ENCODE measurements at regions of chr19 and their contacts with region 1.

Region 1: DNA sequence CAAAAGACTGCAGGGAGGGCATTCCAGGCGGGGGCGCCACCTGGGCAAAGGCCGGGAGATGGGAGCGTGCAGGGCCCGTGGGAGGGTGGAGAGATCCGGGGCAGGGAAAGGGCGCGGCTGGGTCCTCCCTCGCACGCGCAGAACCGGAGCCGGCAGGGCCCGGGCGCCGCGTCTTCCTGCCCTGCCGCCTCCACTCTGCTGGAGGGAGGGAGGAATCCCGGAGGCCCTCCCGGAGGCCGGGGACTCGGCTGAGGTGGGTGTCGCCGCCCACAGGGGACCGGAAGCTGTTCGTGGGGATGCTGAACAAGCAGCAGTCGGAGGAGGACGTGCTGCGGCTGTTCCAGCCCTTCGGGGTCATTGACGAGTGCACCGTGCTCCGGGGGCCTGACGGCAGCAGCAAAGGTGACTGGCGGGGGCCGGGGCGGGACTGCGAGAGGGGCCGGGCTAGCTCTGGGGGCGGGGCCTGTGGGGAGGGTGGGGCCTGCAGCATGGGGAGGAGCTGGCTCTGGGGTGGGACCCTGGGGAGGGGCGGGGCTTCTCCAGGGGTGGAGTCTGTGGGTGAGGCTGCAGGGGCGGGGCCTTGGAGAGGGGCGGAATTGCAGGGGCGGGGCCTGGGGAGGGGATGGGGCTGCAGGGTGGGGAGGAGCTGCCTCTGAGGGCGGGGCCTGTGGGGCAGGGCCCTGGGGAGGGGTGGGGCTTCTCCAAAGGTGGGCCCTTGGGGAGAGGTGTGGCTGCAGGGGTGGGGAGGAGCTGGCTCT is 51.3 kb downstream of the CELF5 start:
- DNase-seq: peak; percentile 78 to 96 (median 91)
- ATAC-seq: peak; percentile 89
- H3K4me3 ChIP-seq: peak overlapping the region; percentile 74
- H3K4me3 Mint-ChIP-seq: peak overlapping the region; percentile 82 to 92 (median 86)
- H3K27ac ChIP-seq: peak overlapping the region; percentile 62
- H3K27ac Mint-ChIP-seq: peak overlapping the region in 8 of 9 donors; percentile 32 to 89 (median 84)
- H3K4me1 ChIP-seq: peaks cover 8 to 16% of the 10 kb centered on the region in 2 donors
- H3K4me1 Mint-ChIP-seq: peaks cover 8 to 22% (median 14%) of the 10 kb centered on the region in 7 donors
- H3K27me3 ChIP-seq: no peaks in the 10 kb centered on the region
- H3K27me3 Mint-ChIP-seq: peaks cover 7 to 16% (median 12%) of the 10 kb centered on the region in 5 donors

Region 2: DNA sequence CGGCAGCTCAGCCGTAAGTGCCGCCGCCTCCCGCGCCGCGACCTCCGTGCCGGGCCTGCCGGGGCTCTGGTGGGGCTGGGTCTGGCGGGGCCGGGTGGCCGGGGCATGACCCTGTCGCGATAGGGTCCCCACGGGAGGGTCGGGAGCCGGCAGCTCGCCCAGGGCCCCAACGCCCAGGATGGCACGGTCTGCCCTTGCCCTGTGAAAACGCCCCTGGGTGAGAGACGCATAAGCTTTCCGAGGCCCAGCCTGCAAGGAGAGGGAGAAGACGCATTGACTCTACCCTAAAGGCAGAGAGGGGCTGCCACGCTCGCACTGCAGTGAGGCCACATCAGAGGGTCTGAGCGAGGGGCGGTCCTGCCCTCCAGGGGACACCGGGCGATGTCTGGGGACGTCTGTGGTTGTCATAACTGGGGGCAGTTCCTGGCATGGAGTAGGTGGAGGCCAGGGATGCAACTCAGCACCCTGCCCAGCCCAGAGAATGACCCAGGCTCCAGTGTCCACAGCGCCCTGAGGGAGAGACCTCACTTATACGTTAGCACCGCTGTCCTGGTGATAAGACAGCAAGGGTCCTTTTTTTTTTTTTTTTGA is 455.6 kb before region 1 on chr19:
- CTCF ChIA-PET with region 1: no interaction called
- POLR2A ChIA-PET with region 1: no interaction called
- intact Hi-C with region 1: no loop called
- DNase-seq: no peak
- ATAC-seq: no peak
- H3K4me3 ChIP-seq: peak overlapping the region; percentile 79
- H3K4me3 Mint-ChIP-seq: peak overlapping the region; percentile 79 to 90 (median 86)
- H3K27ac ChIP-seq: peak overlapping the region; percentile 76
- H3K27ac Mint-ChIP-seq: peak overlapping the region in 5 of 9 donors; percentile 22 to 80 (median 52)
- H3K4me1 ChIP-seq: peaks cover 3 to 4% of the 10 kb centered on the region in 2 donors
- H3K4me1 Mint-ChIP-seq: peaks cover 3 to 19% (median 6%) of the 10 kb centered on the region in 7 donors
- H3K27me3 ChIP-seq: no peaks in the 10 kb centered on the region
- H3K27me3 Mint-ChIP-seq: no peaks in the 10 kb centered on the region

Region 3: DNA sequence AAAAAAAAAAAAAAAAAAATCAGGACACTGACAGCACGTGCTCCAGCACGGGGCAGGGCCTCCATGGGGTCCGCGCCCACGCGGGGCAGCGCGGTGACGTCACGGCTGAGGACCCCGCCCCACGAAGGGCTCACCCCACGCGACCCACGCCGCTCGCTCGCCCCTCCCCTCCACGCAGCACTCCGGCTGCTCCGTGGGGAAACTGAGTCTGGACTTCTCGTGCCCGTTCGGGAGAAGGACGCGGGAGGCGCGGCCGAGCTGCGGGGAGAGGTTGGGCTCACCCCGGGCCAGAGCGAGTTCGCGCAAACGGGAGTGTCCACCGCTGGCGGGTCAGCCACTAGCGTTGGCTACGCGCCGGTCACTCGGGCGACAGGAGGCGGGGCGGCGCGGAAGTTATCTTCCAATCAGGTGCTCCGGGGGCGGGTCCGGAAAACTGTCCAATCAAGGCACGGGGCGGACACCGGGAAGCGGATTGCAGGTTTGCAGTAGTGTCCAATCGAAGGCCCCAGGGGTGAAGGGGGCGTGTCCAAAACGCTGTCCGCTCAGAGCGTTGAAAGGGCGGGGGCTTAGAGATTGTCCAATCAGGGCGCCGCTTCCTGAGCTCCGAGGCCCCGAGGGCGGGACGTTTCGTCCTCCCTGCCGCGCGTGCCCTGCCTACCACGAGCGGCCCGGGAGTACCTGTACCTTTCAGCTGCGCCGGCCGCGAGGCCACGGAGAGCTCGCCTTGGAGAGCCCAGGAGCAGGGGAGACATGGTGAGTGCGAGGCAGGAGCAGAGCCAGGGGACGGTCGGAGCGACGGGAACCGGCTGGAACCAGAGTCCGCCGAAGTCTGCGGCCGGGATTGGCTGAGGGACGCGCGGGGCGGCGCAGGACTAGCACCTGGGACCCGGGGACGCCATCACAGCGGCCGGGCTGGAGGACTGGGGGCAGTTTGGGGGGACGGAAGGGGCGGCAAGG is 375.2 kb before region 1 on chr19 and contains the start of gene ZNF57:
- CTCF ChIA-PET with region 1: no interaction called
- POLR2A ChIA-PET with region 1: no interaction called
- intact Hi-C with region 1: loop called in 1 of 2 experiments (anchors 1 kb)
- DNase-seq: peak; percentile 83 to 98 (median 96)
- ATAC-seq: peak; percentile 99
- H3K4me3 ChIP-seq: peak within 1 kb of the TSS; percentile 79
- H3K4me3 Mint-ChIP-seq: peak within 1 kb of the TSS; percentile 88 to 99 (median 96)
- H3K27ac ChIP-seq: peak within 1 kb of the TSS; percentile 63
- H3K27ac Mint-ChIP-seq: peak within 1 kb of the TSS; percentile 55 to 91 (median 85)
- H3K4me1 ChIP-seq: peaks cover 0 to 4% of the 10 kb centered on the region in 2 donors
- H3K4me1 Mint-ChIP-seq: peaks cover 11 to 28% (median 21%) of the 10 kb centered on the region in 7 donors
- H3K27me3 ChIP-seq: no peaks in the 10 kb centered on the region
- H3K27me3 Mint-ChIP-seq: no peaks in the 10 kb centered on the region
- total RNA-seq, gene ZNF57: 1.7 to 5.0 (median 2.2) TPM

Region 4: GRCh38 chr19:2944775-2945574 is 330.8 kb before region 1 on chr19 and contains the start of gene ZNF77:
- CTCF ChIA-PET with region 1: no interaction called
- POLR2A ChIA-PET with region 1: no interaction called
- intact Hi-C with region 1: loop called in 1 of 2 experiments (anchors 10 kb)
- DNase-seq: peak; percentile 93 to 99 (median 99)
- ATAC-seq: peak; percentile 99
- H3K4me3 ChIP-seq: peak within 1 kb of the TSS; percentile 86
- H3K4me3 Mint-ChIP-seq: peak within 1 kb of the TSS; percentile 94 to 99 (median 97)
- H3K27ac ChIP-seq: peak within 1 kb of the TSS; percentile 87
- H3K27ac Mint-ChIP-seq: peak within 1 kb of the TSS; percentile 90 to 99 (median 98)
- H3K4me1 ChIP-seq: peaks cover 11 to 15% of the 10 kb centered on the region in 2 donors
- H3K4me1 Mint-ChIP-seq: peaks cover 15 to 43% (median 34%) of the 10 kb centered on the region in 7 donors
- H3K27me3 ChIP-seq: no peaks in the 10 kb centered on the region
- H3K27me3 Mint-ChIP-seq: no peaks in the 10 kb centered on the region
- total RNA-seq, gene ZNF77: 2.0 to 5.8 (median 4.3) TPM

Region 5: DNA sequence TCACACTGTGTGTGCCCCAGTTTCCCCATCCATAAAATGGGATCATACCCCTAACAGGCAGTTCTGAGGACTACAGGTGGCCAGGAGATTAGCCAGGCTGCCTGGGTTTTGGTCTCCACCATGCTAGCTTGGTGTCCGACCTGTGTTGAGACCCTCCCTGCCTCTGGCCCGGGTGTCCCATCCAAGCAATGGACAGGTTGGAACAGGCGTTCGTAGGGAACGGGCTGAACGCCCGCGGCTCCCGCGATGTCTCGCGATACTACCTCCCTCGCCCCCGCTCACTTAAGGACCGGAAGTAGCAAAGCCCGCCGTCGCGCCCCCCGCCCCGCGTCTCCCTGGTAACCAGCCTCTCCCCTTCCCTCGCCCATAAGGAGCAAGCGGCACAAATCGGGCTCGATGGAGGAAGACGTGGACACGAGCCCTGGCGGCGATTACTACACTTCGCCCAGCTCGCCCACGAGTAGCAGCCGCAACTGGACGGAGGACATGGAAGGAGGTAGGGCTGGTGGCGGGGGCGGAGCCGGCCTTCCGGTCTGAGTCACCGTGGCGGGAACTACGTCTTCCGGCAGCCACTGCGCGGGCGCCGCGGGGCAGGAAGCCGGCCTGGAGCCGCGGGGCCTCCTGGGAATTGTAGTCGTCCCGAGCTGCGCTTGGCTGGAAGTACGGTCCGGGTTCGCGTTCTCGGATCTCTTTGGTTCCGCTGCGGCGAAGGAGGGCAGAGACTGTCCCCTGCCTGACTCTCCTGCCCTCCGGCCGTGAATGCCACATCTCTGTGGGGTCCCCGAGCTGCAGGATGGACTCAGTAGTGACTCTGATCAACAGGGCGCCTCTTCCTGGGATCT is 159.2 kb after region 1 on chr19:
- CTCF ChIA-PET with region 1: no interaction called
- POLR2A ChIA-PET with region 1: no interaction called
- intact Hi-C with region 1: loop called in 1 of 2 experiments (anchors 1 kb)
- DNase-seq: peak; percentile 91 to 97 (median 96)
- ATAC-seq: peak; percentile 99
- H3K4me3 ChIP-seq: peak overlapping the region; percentile 70
- H3K4me3 Mint-ChIP-seq: peak overlapping the region; percentile 87 to 100 (median 96)
- H3K27ac ChIP-seq: peak overlapping the region; percentile 86
- H3K27ac Mint-ChIP-seq: peak overlapping the region; percentile 95 to 99 (median 98)
- H3K4me1 ChIP-seq: peaks cover 9 to 11% of the 10 kb centered on the region in 2 donors
- H3K4me1 Mint-ChIP-seq: peaks cover 7 to 18% (median 14%) of the 10 kb centered on the region in 7 donors
- H3K27me3 ChIP-seq: no peaks in the 10 kb centered on the region
- H3K27me3 Mint-ChIP-seq: no peaks in the 10 kb centered on the region

Region 6: DNA sequence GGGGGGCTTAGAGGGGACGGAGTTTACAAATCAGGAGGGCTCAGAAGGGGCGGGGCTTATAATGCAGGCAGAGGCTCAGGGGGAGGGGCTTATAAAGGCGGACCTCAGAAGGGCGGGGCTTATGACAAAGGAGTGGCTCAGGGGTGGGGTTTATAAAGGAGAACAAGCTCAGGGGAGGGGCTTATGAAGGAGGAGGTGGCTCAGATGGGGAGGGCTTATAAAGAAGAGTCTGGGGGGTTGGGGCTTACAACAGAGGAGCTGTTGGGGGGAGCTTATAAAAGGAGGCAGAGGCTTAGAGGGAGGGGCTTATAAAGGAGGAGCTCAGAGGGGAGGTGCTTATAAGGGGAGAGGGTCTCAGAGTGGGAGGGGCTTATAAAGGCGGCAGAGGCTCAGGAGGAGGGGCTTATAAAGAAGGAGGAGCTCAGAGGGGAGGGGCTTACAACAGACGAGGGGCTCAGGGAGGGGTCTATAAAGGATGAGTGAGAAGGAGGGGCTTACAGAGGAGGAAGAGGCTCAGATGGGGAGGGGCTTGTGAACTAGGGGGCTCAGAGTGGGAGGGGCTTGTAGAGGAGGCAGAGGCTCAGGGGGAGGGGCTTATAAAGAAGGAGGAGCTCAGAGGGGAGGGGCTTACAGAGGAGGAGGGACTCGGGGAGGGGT is 203.5 kb after region 1 on chr19:
- CTCF ChIA-PET with region 1: no interaction called
- POLR2A ChIA-PET with region 1: no interaction called
- intact Hi-C with region 1: loop called in 1 of 2 experiments (anchors 1 kb)
- DNase-seq: peak in 7 of 9 donors; percentile 22 to 67 (median 48)
- ATAC-seq: peak; percentile 85
- H3K4me3 ChIP-seq: no peak overlapping the region
- H3K4me3 Mint-ChIP-seq: peak overlapping the region in 7 of 10 donors; percentile 25 to 82 (median 70)
- H3K27ac ChIP-seq: no peak overlapping the region
- H3K27ac Mint-ChIP-seq: no peak overlapping the region
- H3K4me1 ChIP-seq: peaks cover 0 to 6% of the 10 kb centered on the region in 2 donors
- H3K4me1 Mint-ChIP-seq: peaks cover 10 to 18% (median 15%) of the 10 kb centered on the region in 7 donors
- H3K27me3 ChIP-seq: no peaks in the 10 kb centered on the region
- H3K27me3 Mint-ChIP-seq: peaks cover 0 to 6% (median 0%) of the 10 kb centered on the region in 5 donors

Measured in naive thymus-derived CD4-positive, alpha-beta T cell (primary cell).